ENCODE measurements at regions of chr16 and their contacts with region 1.

Region 1: GRCh38 chr16:3023669-3024478 is at the starts of genes HCFC1R1 and THOC6:
- DNase-seq: peak; percentile 75
- H3K27ac ChIP-seq: peak within 1 kb of the TSS; percentile 99
- CTCF ChIP-seq: no peak

Region 2: GRCh38 chr16:2854700-2855309 is 169.1 kb before region 1 on chr16:
- CTCF ChIA-PET with region 1: no interaction called
- POLR2A ChIA-PET with region 1: no interaction called
- DNase-seq: no peak
- H3K27ac ChIP-seq: no peak overlapping the region; the same call in 1 of the 2 replicates
- CTCF ChIP-seq: peak; percentile 46

Region 3: GRCh38 chr16:2926650-2927646 is 96.9 kb before region 1 on chr16:
- CTCF ChIA-PET with region 1: no interaction called
- POLR2A ChIA-PET with region 1: no interaction called
- DNase-seq: peak; percentile 69
- H3K27ac ChIP-seq: no peak overlapping the region
- CTCF ChIP-seq: peak; percentile 95

Region 4: GRCh38 chr16:2990891-2991290 is 33.0 kb before region 1 on chr16:
- CTCF ChIA-PET with region 1: no interaction called
- POLR2A ChIA-PET with region 1: interaction called, 10 read pairs
- DNase-seq: no peak
- H3K27ac ChIP-seq: no peak overlapping the region; the same call in 1 of the 2 replicates
- CTCF ChIP-seq: no peak

Region 5: DNA sequence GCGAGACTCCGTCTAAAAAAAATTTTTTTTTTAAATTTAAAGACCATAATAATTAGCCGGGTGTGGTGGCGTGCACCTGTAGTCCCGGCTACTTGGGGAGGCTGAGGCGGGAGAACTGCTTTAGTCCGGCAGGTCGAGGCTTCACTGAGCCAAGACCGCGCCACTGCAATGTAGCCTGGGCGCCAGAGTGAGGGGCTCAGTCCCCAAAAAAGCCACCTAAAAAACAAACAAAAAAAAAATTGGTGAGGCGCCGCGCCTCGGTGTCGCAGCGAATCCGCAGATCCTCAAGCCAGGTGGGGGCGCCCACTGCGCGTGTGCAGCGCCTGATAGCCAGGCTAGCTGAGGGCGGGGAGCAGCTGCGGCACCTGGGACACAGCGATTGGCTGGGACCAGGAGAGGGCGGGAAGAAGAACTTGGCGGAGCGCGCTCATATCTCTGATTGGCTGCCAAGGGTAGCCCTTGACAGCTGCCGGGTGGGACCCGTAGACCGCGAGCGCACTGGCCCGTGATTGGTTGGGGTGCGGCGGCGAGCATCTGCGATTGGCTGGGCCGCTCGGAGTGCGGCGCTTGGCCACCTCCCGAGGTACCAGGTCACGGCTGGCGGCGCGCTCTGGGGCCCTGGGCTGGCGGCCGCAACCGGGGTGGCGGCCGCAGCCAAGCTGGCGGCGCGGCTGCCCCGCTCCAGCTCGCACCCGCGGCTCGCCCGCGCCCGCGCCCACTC is 20.1 kb before region 1 on chr16:
- CTCF ChIA-PET with region 1: interaction called, 19 read pairs
- POLR2A ChIA-PET with region 1: interaction called, 48 read pairs
- DNase-seq: peak; percentile 99
- H3K27ac ChIP-seq: no peak overlapping the region
- CTCF ChIP-seq: peak; percentile 86

Region 6: GRCh38 chr16:3012828-3013420 is 10.9 kb before region 1 on chr16 and contains the start of gene CLDN9:
- CTCF ChIA-PET with region 1: interaction called, 6 read pairs
- POLR2A ChIA-PET with region 1: interaction called, 49 read pairs
- DNase-seq: no peak
- H3K27ac ChIP-seq: no peak within 1 kb of the TSS
- CTCF ChIP-seq: no peak

Region 7: DNA sequence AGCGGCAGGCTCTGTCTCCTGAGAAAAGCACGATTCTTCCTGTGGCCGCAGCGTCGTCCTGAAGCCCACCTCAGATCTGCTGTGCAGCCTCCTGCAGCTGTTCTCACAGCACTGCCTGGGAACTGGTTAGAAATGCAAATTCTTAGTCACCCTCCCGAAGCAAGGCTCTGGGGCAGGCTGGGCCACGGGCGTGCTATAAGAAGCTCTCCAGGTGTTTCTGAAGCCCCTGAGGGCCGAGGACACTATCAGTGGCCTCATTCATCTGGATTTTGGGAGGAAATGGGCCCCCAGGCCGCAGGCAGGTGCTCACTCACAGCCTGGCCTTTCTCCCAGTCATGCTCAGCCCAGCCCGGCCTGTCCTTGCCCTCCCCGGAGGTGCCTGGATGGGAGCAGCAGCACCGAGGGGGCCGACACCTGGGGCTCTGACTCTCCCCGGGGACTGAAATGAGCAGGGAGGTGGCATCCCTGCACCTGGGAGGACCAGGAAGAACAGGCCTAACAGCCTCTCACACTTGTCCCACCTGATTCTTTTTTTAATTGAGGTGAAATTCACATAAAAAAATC is 563.8 kb after region 1 on chr16:
- CTCF ChIA-PET with region 1: no interaction called
- POLR2A ChIA-PET with region 1: no interaction called
- DNase-seq: no peak
- H3K27ac ChIP-seq: 0 out of 2 replicates have a peak overlapping the region, but pooled peaks have one; percentile 21
- CTCF ChIP-seq: no peak